Transverse colon (tissue), 4 donors: ENCODE measurements at regions of chr15 and their contacts with region 1.

Region 1: GRCh38 chr15:78767331-78767951 is 43.8 kb downstream of the ADAMTS7 start:
- DNase-seq: peak; percentile 4
- H3K4me3 ChIP-seq: no peak overlapping the region
- H3K27ac ChIP-seq: no peak overlapping the region
- H3K4me1 ChIP-seq: no peaks in the 10 kb centered on the region
- H3K27me3 ChIP-seq: no peaks in the 10 kb centered on the region
- CTCF ChIP-seq: no peak
- EP300 ChIP-seq: no peak
- POLR2A ChIP-seq: no peak

Region 2: GRCh38 chr15:78695854-78696253 is 71.6 kb before region 1 on chr15:
- in situ Hi-C with region 1: no loop called
- intact Hi-C with region 1: no loop called
- DNase-seq: no peak
- H3K4me3 ChIP-seq: no peak overlapping the region
- H3K27ac ChIP-seq: no peak overlapping the region
- H3K4me1 ChIP-seq: no peaks in the 10 kb centered on the region
- H3K27me3 ChIP-seq: no peaks in the 10 kb centered on the region
- CTCF ChIP-seq: no peak
- EP300 ChIP-seq: no peak
- POLR2A ChIP-seq: no peak

Region 3: DNA sequence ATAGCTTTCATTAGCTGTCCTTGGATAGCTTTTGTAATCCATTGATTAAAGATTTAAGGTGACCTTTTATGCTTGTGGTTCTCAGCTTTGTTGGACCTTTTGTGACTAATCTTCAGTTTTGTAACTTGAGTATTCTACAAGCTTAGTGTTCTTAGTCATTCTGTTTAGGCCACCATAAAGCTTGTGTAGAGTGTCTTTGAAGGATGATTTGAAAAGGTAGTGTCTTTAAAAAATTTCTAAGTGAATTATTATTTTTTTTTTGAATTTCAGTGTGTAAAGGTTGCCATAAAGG is 112.7 kb after region 1 on chr15:
- in situ Hi-C with region 1: no loop called
- intact Hi-C with region 1: loop called (anchors 10 kb)
- DNase-seq: no peak
- H3K4me3 ChIP-seq: no peak overlapping the region
- H3K27ac ChIP-seq: peak overlapping the region in 1 of 4 donors; percentile 33
- H3K4me1 ChIP-seq: peaks cover 8 to 79% (median 42%) of the 10 kb centered on the region in 4 donors
- H3K27me3 ChIP-seq: no peaks in the 10 kb centered on the region
- CTCF ChIP-seq: no peak
- EP300 ChIP-seq: no peak
- POLR2A ChIP-seq: no peak